ENCODE measurements at regions of chr11 and their contacts with region 1.

Region 1: DNA sequence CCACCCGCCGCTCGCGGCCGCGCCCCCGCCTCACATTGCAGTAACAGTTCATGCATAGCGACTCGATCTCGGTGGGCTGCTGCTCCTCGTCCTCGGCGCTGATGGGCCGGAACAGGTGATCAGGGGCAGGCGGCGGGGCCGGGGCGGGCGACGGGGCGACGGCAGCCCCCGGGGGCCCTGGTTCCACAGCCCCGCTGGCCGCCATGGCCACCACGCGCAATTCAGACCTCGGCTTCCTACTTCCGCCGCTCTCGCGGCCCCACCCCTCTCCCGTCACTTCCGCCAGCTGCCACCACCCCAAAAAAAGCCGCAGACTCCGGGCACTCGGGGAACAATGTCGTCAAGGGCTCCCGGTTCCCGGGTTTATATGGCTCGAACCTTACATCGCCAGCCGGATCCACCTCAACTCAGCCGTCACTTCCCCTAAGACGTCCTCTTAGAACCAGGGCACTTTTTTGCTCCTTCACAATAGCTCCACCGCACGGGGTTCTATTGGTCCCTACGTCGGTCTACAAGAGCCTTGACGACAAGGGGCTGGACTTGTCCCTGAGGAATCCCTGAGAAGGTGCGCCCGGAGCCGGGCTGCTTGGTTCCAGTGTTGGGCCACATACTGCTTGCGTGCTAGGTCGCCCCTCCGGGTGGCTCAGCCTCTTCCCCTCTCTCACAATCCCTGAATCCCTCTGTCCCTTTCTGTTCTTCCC is at the start of gene ZPR1:
- DNase-seq: peak; percentile 75 to 83 (median 81)
- H3K4me3 ChIP-seq: peak within 1 kb of the TSS; percentile 76 to 93 (median 86)
- H3K27ac ChIP-seq: peak within 1 kb of the TSS; percentile 77
- H3K4me1 ChIP-seq: peaks cover 0 to 27% (median 21%) of the 10 kb centered on the region in 4 experiments
- H3K27me3 ChIP-seq: peaks cover 0 to 2% (median 0%) of the 10 kb centered on the region in 5 experiments

Region 2: DNA sequence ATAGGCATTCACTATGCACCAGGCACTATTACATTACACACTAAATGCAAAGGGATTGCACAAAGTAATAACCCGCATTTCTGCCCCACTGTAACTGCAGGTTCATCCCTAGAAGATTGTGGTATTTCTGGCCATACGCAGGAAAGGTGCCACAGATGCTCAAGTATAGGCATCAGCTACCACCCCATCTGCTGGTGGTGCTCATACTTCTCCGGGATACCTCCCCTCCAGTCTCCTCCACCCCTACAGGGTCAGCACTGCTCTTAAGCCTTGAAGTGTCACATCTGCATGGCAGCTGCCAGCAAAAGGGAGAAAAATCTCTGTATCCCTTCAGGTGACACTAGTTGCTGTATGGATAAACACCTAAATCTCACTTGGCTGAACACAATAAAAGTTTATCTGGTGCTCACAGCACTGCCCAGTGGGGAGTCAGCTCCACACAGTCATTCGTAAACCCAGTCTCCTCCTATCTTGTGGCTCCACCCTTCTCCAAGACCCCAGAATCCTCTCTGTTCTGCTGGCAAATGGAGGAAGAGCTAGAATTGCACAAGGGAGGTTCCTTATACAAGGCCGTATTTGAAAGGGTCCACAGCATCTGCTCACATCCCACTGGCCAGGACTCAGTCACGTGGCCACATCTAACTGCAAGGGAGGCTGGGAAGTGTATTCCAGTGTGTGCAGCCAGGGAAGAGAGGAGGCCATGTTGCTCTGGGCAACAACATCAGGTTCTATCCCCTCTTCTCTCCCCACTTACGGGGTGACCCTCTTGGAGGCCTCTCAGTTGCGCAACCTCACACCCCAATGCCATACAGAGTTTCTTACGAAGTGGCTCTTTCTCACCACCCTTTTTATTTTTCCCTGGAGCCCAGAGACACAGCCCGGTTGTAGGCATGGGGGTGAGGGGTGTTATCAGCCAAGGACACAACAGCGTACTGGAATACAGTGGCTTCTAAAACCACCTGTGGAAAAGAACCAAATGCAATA is 129.8 kb before region 1 on chr11:
- CTCF ChIA-PET with region 1: no interaction called
- POLR2A ChIA-PET with region 1: no interaction called
- DNase-seq: no peak
- H3K4me3 ChIP-seq: no peak overlapping the region
- H3K27ac ChIP-seq: no peak overlapping the region
- H3K4me1 ChIP-seq: peaks cover 0 to 2% (median 0%) of the 10 kb centered on the region in 4 experiments
- H3K27me3 ChIP-seq: no peaks in the 10 kb centered on the region

Region 3: DNA sequence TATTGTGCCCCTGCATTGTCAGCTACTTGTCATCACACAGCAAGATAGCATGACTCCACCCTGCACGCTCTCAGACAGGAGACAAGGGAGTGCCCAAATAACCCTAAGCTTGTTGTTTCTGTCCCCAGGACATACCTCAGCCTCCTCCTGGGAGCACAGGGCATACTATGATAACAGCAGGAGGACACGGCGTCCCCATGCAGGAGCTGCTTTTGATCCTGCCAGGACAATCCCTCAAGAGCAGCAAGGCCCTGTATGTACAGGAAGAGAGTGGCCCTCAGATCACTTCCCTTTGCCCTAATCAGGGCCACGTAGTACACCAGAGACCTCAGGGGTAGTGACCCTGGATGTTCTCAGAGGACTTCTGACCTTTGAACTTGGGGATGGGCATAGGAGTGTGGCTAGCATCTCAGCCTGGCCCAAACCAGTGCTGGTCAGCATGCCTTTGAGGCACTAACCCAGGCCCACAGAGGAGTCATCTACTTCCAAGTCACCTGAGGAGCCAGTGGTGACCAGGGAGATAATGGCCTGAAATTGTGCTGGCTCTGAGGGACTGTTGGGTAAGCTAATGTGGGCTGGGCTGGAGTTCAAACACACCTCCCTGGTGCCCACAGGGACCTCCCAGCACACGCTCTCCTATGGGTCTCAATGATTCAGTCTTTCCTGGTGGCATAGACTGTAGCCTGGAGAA is 26.0 kb after region 1 on chr11:
- CTCF ChIA-PET with region 1: interaction called, 14 read pairs
- POLR2A ChIA-PET with region 1: no interaction called
- DNase-seq: no peak
- H3K4me3 ChIP-seq: no peak overlapping the region
- H3K27ac ChIP-seq: no peak overlapping the region
- H3K4me1 ChIP-seq: no peaks in the 10 kb centered on the region
- H3K27me3 ChIP-seq: peaks cover 0 to 2% (median 0%) of the 10 kb centered on the region in 5 experiments

Region 4: GRCh38 chr11:116853461-116854073 is 65.6 kb after region 1 on chr11:
- CTCF ChIA-PET with region 1: interaction called, 46 read pairs
- POLR2A ChIA-PET with region 1: no interaction called
- DNase-seq: peak; percentile 89 to 98 (median 97)
- H3K4me3 ChIP-seq: peak overlapping the region in 2 of 7 experiments; percentile 27 to 57
- H3K27ac ChIP-seq: peak overlapping the region; percentile 79 to 87
- H3K4me1 ChIP-seq: peaks cover 40 to 73% (median 72%) of the 10 kb centered on the region in 4 experiments
- H3K27me3 ChIP-seq: no peaks in the 10 kb centered on the region

Region 5: DNA sequence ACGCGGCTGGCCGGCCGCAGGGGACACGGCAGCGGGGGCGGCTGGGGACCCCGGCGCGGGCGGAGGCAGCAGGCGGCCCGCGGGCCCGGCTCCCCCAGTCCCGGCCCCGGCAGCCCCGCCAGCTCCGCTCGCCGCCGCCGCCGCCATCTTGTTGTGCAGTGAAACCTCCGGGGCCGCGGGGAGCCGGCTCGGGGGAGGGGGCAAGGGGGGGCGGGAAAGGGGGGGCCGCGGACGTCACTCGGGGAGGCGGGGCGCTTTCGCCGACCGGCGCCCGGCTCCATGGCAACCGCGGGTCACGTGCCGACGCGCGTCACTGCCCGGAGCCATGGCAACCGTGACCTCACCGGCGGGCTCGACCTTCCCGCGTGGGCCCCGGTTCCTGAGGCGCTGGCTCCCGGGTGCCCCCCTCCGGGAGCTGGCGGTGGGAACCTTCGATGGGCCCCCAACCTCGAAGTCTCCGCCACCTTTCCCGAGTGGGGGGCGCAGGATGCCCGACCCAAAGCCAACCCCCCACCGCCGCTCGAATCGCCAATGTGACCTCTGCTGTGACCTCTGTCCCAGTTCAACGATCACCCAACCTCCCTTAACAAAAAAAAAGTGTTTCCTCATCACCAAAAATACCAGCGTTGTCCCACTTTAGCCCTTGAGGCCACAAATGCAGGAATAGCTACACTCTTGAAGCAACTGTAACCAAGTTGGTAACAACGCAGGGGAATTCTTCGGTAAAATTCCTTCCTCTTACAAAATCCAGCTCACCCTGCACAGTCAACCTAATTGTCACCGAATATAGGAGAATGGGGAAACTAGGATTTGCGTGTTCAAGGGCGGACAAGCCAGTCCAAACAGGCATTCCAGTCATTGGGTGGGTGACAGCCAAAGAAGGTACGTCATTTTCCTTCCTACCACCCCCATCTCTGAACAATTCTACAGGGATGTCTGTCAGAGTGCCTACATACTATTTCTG is 310.6 kb after region 1 on chr11 and contains the start of gene SIK3:
- CTCF ChIA-PET with region 1: interaction called, 13 read pairs
- POLR2A ChIA-PET with region 1: interaction called, 3 read pairs
- DNase-seq: peak; percentile 91 to 93 (median 93)
- H3K4me3 ChIP-seq: peak within 1 kb of the TSS; percentile 70 to 96 (median 90)
- H3K27ac ChIP-seq: peak within 1 kb of the TSS; percentile 92 to 97
- H3K4me1 ChIP-seq: peaks cover 22 to 44% (median 39%) of the 10 kb centered on the region in 4 experiments
- H3K27me3 ChIP-seq: no peaks in the 10 kb centered on the region

Region 6: DNA sequence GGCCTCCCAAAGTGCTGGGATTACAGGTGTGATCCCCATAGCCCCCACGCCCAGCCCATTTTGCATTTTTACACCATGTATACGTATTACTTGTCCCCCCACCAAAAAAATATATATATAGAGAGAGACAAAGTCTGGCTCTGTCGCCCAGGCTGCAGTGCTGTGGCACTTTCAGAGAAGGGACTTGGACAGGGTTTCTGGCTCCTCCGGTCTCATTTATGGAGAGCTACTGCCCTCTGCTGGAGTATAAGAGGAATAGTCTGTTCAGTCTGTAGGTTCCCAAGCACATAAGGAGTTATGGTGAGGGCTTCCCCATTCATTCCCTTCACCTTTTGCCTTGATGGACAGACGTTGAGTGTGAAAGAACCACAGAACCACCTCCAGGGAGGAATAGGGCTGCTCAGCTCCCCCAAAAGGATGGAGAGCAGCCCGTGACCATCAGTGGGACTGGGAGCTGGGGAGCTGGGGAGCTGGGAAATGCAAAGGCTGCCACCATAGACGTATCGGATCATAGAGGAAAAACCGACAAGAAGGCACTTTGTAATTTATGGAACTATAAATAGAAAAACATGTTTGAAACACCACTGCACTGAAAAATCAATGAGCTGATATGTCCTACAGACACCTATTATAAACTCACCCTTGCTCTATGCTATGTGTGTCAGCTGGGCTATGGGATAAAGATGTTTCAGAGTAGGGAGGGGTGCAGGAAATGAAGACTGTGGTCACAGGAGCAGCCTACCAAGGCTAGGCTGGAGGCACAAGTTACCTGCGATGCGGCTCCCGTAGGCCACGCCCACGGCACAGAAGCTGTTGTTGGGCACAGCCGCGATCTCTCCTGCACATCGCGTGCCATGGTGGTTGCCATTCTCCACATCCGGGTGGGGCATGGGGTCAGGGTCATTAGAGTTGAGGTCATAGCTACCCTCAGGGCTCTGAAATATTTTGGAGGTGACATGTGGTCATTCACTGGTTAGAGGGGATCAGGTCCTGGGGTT is 438.8 kb after region 1 on chr11:
- CTCF ChIA-PET with region 1: interaction called, 10 read pairs
- POLR2A ChIA-PET with region 1: no interaction called
- DNase-seq: peak; percentile 76 to 90 (median 84)
- H3K4me3 ChIP-seq: no peak overlapping the region
- H3K27ac ChIP-seq: no peak overlapping the region
- H3K4me1 ChIP-seq: peaks cover 9 to 16% (median 14%) of the 10 kb centered on the region in 4 experiments
- H3K27me3 ChIP-seq: no peaks in the 10 kb centered on the region

Measured in common myeloid progenitor, CD34-positive (primary cell).